Colonic mucosa (tissue), 4 donors: ENCODE measurements at regions of chr5 and their contacts with region 1.

Region 1: GRCh38 chr5:54234304-54234933 is 76.0 kb downstream of the ARL15 start:
- DNase-seq: no peak
- H3K4me3 ChIP-seq: no peak overlapping the region
- H3K27ac ChIP-seq: no peak overlapping the region
- H3K4me1 ChIP-seq: no peaks in the 10 kb centered on the region
- H3K27me3 ChIP-seq: no peaks in the 10 kb centered on the region
- CTCF ChIP-seq: no peak

Region 2: DNA sequence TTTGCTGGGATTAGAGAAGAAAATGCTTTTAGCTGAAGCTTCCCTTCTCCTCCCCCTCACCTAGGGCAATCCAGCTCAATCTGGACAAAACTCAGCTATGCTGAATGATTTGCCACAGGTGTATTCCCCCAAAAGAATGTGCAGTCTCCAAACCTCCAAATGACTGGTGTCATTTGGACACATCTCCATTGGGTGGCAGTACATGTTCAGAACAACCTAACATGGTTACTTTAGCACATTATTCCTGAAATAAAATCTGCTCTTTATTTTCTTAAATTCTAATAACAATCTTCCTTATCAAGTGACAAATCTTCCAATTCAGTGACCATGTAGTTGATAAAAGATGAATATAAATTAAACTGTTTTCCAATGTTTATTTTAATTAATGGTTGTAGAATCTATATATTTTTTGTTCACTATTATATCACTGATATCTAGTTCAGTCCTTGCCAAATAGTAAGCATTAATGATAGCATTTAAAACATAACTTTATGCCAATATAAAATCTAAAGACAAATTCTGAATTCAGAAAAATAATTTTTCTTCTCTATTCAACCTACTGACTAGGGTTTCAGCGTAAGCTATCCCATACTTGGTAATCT is 1063.6 kb before region 1 on chr5:
- intact Hi-C with region 1: loop called (anchors 5 kb)
- DNase-seq: no peak
- H3K4me3 ChIP-seq: no peak overlapping the region
- H3K27ac ChIP-seq: no peak overlapping the region
- H3K4me1 ChIP-seq: no peaks in the 10 kb centered on the region
- H3K27me3 ChIP-seq: no peaks in the 10 kb centered on the region
- CTCF ChIP-seq: peak; percentile 54

Region 3: DNA sequence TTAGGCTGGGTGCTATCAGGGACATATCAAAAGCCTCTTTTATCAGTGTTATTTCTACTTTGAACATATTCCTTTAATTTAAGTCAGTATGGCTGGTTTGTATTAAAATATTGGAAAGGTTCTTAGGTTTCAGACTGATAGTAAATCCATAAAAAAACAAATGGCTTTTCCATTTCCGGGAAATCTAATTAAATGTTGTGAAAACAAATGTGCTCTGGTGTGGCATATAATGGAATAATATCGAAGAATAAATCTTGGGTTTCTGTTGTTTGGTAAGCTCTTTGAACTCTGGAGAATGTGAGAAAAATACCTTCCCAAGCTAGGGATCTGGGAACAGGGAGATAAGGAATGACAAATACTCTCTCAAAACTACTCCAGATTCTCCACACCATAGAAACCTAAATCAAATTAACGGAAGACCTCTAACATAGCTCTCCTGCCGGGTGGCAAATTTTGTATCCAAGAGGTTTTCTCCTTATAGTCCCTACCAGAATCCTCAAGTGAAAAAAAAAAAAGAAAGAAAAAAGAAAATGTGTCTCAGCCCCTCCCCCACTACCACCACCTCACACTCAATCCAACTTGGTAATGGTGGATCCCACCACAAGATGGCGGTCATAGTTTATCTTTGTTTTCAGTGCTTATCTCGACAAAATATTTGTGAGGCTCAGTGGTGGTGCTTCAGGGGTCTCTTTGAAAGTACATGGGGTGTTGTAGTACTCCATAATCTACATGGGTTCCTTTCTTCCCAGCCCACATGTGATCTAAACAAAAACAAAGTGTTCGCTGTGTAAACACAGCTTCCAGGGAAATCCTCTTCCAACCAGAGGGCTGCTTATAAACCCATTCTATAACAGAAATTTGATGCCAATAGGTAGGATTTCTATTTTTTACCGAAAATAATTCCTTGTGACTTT is 808.6 kb before region 1 on chr5:
- intact Hi-C with region 1: loop called (anchors 5 kb)
- DNase-seq: peak; percentile 37
- H3K4me3 ChIP-seq: no peak overlapping the region
- H3K27ac ChIP-seq: no peak overlapping the region
- H3K4me1 ChIP-seq: no peaks in the 10 kb centered on the region
- H3K27me3 ChIP-seq: no peaks in the 10 kb centered on the region
- CTCF ChIP-seq: peak; percentile 26

Region 4: DNA sequence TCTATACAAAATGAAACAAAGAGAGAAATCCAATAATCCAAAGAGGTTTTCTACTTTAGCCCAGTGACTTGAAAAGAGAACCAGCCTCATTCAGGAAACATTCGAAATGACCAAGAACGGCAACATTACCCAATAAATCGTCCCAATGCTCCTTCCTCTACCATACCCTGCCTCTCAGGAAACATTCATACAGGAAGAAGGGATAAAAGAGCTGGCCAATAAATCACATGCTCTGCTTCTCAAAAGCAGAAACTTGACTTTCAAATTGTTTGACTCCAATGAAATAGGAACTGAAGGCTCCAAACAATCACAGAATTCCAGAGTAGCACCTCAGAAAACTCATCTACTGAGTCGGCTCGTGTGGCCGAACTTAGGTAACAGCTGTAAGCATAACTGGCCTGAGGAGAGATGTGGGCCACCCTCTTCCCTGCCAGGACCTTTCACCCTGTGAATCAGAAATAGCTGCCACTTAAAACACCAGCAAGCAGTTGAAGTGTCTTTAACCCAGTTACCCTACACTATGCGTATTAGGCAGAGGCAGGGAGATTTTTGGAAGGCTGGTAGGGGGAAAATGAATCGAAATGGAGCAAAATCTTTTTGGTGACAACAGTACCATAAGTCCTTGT is 61.3 kb after region 1 on chr5:
- intact Hi-C with region 1: no loop called
- DNase-seq: no peak
- H3K4me3 ChIP-seq: no peak overlapping the region
- H3K27ac ChIP-seq: peak overlapping the region; percentile 60
- H3K4me1 ChIP-seq: peaks cover 13% of the 10 kb centered on the region
- H3K27me3 ChIP-seq: no peaks in the 10 kb centered on the region
- CTCF ChIP-seq: no peak